Caco-2 (cell line): ENCODE measurements at regions of chrX and their contacts with region 1.

Region 1: DNA sequence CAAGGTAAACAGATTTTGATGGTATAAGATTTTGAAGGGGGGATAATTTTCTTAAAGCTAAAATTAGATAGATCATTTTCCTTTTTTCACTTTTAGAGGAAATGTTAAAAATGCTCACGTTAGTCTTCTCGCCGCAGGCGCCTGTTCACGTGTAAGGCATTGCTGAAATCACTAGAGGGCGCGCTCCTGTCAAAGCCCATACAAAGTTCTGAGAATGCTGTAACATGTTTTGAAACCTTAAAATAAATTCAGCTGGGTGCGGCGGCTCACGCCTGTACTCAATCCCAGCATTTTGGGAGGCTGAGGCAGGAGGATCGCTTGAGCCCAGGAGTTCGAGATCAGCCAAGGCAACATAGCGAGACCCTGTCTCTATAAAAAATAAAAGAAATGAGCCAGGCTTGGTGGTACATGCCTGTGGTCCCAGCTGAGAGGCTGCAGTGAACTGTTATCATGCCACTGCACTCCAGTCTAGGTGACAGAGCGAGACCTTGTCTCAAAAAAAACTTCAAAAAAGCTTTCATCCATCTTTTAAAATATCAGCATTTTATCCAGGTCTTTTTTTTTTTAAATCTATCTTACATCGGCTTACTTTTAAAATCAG is 138.0 kb downstream of the RBMX2 start:
- DNase-seq: peak in 1 of 2 experiments; percentile 32
- H3K4me3 ChIP-seq: no peak overlapping the region
- H3K4me3 Mint-ChIP-seq: no peak overlapping the region
- H3K27ac Mint-ChIP-seq: no peak overlapping the region
- H3K4me1 ChIP-seq: no peaks in the 10 kb centered on the region
- H3K4me1 Mint-ChIP-seq: no peaks in the 10 kb centered on the region
- H3K27me3 ChIP-seq: no peaks in the 10 kb centered on the region
- H3K27me3 Mint-ChIP-seq: peaks cover 10% of the 10 kb centered on the region
- CTCF ChIP-seq: peak; percentile 57 to 72

Region 2: GRCh38 chrX:130339408-130340222 is 200.2 kb before region 1 on chrX and contains the start of gene SLC25A14:
- CTCF ChIA-PET with region 1: no interaction called
- POLR2A ChIA-PET with region 1: no interaction called
- intact Hi-C with region 1: loop called (anchors 10 kb)
- DNase-seq: peak; percentile 72 to 75
- H3K4me3 ChIP-seq: peak within 1 kb of the TSS; percentile 72
- H3K4me3 Mint-ChIP-seq: peak within 1 kb of the TSS; percentile 99
- H3K27ac Mint-ChIP-seq: peak within 1 kb of the TSS; percentile 99
- H3K4me1 ChIP-seq: no peaks in the 10 kb centered on the region
- H3K4me1 Mint-ChIP-seq: no peaks in the 10 kb centered on the region
- H3K27me3 ChIP-seq: no peaks in the 10 kb centered on the region
- H3K27me3 Mint-ChIP-seq: no peaks in the 10 kb centered on the region
- CTCF ChIP-seq: no peak
- total RNA-seq, gene SLC25A14: 7.4 and 8.3 TPM in 2 replicates

Region 3: DNA sequence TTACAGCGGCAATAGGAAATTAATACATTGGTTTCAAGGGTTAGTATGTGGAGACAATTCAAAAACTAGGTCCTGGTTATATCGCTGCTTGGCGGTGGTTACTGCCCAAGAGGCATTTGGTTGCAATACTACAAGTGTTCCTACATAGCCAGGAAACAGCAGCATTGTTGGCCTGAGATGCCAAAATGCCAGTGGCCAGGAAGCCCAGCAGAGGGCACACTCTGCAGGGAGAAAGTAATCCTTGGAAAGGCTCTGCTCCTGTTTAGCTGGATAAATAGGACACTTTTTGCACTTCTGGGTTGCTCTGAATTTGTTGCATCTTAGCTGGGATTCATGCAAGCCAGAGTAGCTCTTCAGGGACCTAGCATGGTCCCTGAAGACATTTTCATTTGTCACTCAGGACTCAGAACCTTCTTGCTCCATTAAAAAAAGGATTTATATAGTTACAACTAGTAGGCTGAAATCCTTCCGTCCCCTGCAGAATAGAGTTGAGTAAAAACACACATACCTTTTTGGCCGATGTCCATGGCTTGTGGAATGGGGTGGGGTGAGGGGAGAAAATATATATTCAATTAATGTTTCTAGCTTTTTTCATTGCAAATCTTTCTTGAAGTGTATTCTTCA is 146.3 kb before region 1 on chrX:
- CTCF ChIA-PET with region 1: no interaction called
- POLR2A ChIA-PET with region 1: no interaction called
- intact Hi-C with region 1: loop called (anchors 2 kb)
- DNase-seq: peak; percentile 33 to 35
- H3K4me3 ChIP-seq: no peak overlapping the region
- H3K4me3 Mint-ChIP-seq: no peak overlapping the region
- H3K27ac Mint-ChIP-seq: no peak overlapping the region
- H3K4me1 ChIP-seq: no peaks in the 10 kb centered on the region
- H3K4me1 Mint-ChIP-seq: no peaks in the 10 kb centered on the region
- H3K27me3 ChIP-seq: no peaks in the 10 kb centered on the region
- H3K27me3 Mint-ChIP-seq: no peaks in the 10 kb centered on the region
- CTCF ChIP-seq: peak; percentile 34 to 70